Lower leg skin (tissue), 4 donors: ENCODE measurements at regions of chr6 and their contacts with region 1.

Region 1: GRCh38 chr6:108655806-108656651 is 95.3 kb downstream of the FOXO3 start:
- DNase-seq: no peak
- H3K4me3 ChIP-seq: no peak overlapping the region
- CTCF ChIP-seq: no peak
- POLR2A ChIP-seq: no peak

Region 2: DNA sequence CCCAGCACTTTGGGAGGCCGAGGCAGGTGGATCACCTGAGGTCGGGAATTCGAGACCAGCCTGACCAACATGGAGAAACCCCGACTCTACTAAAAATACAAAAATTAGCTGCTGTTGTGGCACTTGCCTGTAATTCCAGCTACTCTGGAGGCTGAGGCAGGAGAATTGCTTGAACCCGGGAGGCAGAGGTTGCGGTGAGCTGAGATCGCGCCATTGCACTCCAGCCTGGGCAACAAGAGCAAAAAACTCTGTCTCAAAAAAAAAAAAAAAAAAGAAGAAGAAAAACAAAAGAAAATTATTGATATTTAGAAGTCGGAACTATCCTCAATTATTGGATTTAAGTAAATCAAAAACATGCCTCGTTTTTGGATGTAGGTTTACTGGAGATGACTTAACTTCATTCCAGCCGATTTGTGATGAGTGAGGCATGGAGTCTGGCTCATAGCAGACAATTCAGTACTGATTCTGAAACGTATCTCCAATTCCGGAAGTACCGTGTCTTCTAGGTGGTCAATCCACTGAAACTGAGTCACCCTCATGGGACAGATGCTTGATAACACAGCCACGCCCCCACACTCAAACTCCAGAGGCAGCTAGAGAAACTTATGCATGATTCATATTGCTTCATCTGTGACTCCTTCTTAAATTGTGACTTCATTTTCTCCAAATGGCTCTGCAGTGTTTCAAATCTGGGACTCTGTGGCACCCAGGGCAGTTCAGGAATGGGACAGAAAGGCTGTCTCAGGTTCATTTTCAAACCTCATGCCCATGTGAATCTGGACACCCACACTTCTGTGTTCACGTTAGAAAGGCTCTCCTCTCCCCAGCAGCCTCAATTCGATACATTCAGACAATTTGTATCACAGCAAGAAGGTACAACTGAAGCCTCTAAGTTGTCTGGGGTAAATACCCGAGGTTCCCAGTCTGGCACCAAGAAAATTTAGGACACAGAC is 81.8 kb after region 1 on chr6:
- intact Hi-C with region 1: loop called (anchors 10 kb)
- DNase-seq: peak; percentile 77 to 93
- H3K4me3 ChIP-seq: no peak overlapping the region
- CTCF ChIP-seq: no peak
- POLR2A ChIP-seq: no peak